AG04449 (cell line): ENCODE measurements at regions of chr6 and their contacts with region 1.

Region 1: GRCh38 chr6:130322673-130323268 is 43.0 kb upstream of the TMEM200A start:
- DNase-seq: peak; percentile 26
- H3K4me3 ChIP-seq: no peak overlapping the region
- CTCF ChIP-seq: peak; percentile 75

Region 2: DNA sequence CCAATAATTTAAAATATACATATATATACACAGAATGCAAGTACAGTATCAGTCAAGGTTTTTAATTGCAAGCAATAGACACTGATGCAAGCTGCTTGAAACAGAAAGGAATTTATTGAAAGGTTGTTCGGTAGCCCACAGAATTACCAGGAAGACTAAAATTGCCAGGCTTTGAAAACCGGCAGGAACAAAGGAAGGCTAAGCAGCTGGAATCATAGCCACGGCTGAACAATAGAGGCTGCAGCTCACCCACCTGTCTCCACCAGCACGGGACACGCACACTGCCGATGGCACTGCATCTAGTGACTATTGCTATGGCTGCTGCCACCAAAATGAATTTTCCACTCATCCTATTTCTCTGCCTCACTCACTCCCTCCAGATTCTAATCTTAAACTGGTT is 326.4 kb before region 1 on chr6:
- CTCF ChIA-PET with region 1: no interaction called
- POLR2A ChIA-PET with region 1: no interaction called
- DNase-seq: no peak
- H3K4me3 ChIP-seq: no peak overlapping the region
- CTCF ChIP-seq: no peak

Region 3: GRCh38 chr6:130307752-130308361 is 14.9 kb before region 1 on chr6:
- CTCF ChIA-PET with region 1: interaction called, 18 read pairs
- POLR2A ChIA-PET with region 1: no interaction called
- DNase-seq: peak; percentile 34
- H3K4me3 ChIP-seq: no peak overlapping the region
- CTCF ChIP-seq: no peak

Region 4: DNA sequence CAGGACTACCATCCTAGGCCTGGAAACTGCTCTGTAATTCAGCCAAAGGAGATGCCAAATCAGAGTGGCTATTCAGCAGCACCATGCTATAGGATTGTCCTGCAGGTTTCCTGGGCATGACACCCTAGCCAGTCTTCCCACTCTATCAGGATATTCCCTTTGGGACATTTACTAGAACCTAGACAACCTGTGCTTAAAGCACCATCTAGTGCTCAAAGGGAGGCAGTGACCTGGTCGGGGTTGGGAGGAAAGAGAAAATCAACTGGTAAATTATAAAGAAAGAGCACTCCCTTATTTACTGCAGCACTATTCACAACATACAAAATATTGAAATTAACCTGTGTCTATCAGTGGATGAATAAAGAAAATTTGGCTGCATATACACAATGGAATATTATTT is 437.2 kb after region 1 on chr6:
- CTCF ChIA-PET with region 1: interaction called, 12 read pairs
- POLR2A ChIA-PET with region 1: no interaction called
- DNase-seq: no peak
- H3K4me3 ChIP-seq: no peak overlapping the region
- CTCF ChIP-seq: peak; percentile 69

Region 5: DNA sequence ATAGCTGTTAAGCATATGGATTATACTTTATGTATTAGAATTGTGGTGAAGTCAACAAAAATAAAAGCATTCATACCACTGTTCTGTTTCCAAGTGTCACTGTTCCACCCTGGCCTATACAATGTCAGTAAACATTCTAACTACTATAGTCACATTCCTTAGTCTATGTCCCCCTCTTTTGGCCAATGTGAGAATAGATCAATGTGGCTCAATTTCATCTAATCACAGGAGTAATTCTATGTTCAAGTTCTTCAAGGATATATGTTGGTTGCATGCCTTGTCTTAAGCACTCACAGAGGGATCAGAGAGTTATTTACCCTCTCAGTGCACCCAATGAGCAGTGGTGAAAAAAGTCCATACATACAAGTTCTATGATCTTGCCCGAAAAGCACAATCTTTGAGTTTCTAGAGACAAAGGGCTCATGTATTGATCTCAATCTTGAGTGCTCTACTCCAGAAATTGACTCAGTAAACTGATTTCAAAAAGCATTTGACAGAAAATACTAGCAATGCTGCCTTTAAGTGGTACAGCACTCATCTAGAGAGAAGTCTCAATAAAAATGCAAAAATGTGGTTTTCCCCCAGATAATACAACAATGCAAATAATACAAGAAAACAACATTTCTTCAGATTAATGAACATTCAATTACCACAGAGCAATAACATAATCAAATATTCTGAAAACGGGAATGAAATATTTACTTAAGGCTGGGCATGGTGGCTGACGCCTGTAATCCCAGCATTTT is 521.0 kb after region 1 on chr6:
- CTCF ChIA-PET with region 1: interaction called, 21 read pairs
- POLR2A ChIA-PET with region 1: no interaction called
- DNase-seq: no peak
- H3K4me3 ChIP-seq: no peak overlapping the region
- CTCF ChIP-seq: peak; percentile 59

Region 6: GRCh38 chr6:130872250-130873095 is 549.7 kb after region 1 on chr6:
- CTCF ChIA-PET with region 1: interaction called, 16 read pairs
- POLR2A ChIA-PET with region 1: no interaction called
- DNase-seq: no peak
- H3K4me3 ChIP-seq: no peak overlapping the region
- CTCF ChIP-seq: peak; percentile 84